Gastrocnemius medialis (tissue), 4 donors: ENCODE measurements at regions of chr1 and their contacts with region 1.

Region 1: GRCh38 chr1:64616039-64616438 is 128.8 kb upstream of the RAVER2 start:
- DNase-seq: peak; percentile 63 to 73
- ATAC-seq: peak; percentile 99 to 100
- H3K4me3 ChIP-seq: no peak overlapping the region
- H3K27ac ChIP-seq: peak overlapping the region; percentile 66 to 80 (median 76)
- H3K4me1 ChIP-seq: peaks cover 14 to 17% of the 10 kb centered on the region in 2 donors
- H3K27me3 ChIP-seq: no peaks in the 10 kb centered on the region
- CTCF ChIP-seq: no peak
- POLR2A ChIP-seq: peak in 1 of 2 donors; percentile 31

Region 2: DNA sequence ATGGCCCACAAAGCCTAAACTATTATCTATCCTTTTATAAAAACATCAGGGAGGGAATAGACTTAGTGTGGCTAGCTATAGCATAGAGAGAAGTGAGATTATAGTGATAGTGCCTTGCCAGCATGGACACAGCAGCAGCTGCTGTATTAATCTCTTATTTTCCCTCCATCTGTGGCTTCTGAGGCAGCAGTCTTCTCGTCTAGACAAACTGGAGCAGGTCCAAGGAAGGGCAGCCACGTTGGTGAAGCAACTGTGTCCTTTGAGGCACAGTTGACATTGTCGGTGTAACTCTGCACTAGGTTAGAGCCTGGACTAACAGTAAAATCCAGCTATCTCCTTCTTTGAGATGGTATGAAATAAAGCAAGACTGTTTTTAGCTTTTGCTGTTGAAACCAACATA is 14.8 kb before region 1 on chr1:
- in situ Hi-C with region 1: no loop called
- intact Hi-C with region 1: no loop called
- DNase-seq: peak in 1 of 2 donors; percentile 30
- ATAC-seq: peak in 1 of 2 donors; percentile 70
- H3K4me3 ChIP-seq: no peak overlapping the region
- H3K27ac ChIP-seq: no peak overlapping the region
- H3K4me1 ChIP-seq: no peaks in the 10 kb centered on the region
- H3K27me3 ChIP-seq: no peaks in the 10 kb centered on the region
- CTCF ChIP-seq: no peak
- POLR2A ChIP-seq: no peak

Region 3: DNA sequence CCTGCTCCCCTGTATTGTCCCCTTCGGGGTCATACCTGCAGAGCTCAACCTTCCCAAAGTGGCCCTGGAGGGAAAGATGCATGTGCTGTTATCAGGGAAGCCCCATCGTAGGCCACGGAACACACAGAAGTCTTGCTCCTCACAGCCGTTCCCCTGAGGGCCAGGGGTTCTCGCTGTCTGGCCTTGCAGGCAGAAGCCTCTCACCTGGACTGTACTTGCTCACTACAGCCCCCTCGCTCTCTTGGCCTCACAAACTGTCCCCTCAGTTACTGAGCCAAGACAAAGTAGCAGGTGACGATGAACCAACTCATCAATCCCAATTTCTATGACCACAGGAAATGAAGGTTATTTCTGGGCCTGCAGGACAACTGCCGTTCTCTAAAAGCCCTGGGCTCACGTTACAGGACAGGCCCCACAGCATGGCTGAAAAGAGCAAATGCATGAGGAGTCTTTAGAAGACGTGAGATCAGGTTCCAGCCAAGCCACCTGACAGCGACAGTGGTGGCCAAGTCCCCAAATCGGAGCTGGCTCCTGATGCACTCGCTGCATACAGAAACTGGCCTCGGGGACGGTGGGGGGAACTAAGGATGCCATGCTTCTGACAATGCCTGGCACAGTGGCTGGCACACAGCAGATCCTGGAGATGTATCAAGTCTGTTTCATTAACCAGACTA is 223.8 kb after region 1 on chr1:
- in situ Hi-C with region 1: no loop called
- intact Hi-C with region 1: loop called (anchors 5 kb)
- DNase-seq: peak; percentile 84 to 92
- ATAC-seq: peak; percentile 95 to 96
- H3K4me3 ChIP-seq: no peak overlapping the region
- H3K27ac ChIP-seq: peak overlapping the region; percentile 72 to 88 (median 80)
- H3K4me1 ChIP-seq: peaks cover 26 to 27% of the 10 kb centered on the region in 2 donors
- H3K27me3 ChIP-seq: no peaks in the 10 kb centered on the region
- CTCF ChIP-seq: no peak
- POLR2A ChIP-seq: no peak